Calu3 (cell line): ENCODE measurements at regions of chr1 and their contacts with region 1.

Region 1: GRCh38 chr1:206725109-206725963 is 40.6 kb downstream of the MAPKAPK2 start:
- DNase-seq: peak; percentile 66
- H3K4me3 Mint-ChIP-seq: no peak overlapping the region
- H3K27ac Mint-ChIP-seq: no peak overlapping the region
- H3K4me1 Mint-ChIP-seq: peaks cover 46% of the 10 kb centered on the region
- H3K27me3 Mint-ChIP-seq: no peaks in the 10 kb centered on the region
- CTCF ChIP-seq: peak; percentile 40

Region 2: GRCh38 chr1:206489980-206490770 is 235.2 kb before region 1 on chr1:
- CTCF ChIA-PET with region 1: no interaction called
- intact Hi-C with region 1: no loop called
- DNase-seq: peak; percentile 84
- H3K4me3 Mint-ChIP-seq: no peak overlapping the region
- H3K27ac Mint-ChIP-seq: no peak overlapping the region
- H3K4me1 Mint-ChIP-seq: no peaks in the 10 kb centered on the region
- H3K27me3 Mint-ChIP-seq: no peaks in the 10 kb centered on the region
- CTCF ChIP-seq: peak; percentile 95

Region 3: DNA sequence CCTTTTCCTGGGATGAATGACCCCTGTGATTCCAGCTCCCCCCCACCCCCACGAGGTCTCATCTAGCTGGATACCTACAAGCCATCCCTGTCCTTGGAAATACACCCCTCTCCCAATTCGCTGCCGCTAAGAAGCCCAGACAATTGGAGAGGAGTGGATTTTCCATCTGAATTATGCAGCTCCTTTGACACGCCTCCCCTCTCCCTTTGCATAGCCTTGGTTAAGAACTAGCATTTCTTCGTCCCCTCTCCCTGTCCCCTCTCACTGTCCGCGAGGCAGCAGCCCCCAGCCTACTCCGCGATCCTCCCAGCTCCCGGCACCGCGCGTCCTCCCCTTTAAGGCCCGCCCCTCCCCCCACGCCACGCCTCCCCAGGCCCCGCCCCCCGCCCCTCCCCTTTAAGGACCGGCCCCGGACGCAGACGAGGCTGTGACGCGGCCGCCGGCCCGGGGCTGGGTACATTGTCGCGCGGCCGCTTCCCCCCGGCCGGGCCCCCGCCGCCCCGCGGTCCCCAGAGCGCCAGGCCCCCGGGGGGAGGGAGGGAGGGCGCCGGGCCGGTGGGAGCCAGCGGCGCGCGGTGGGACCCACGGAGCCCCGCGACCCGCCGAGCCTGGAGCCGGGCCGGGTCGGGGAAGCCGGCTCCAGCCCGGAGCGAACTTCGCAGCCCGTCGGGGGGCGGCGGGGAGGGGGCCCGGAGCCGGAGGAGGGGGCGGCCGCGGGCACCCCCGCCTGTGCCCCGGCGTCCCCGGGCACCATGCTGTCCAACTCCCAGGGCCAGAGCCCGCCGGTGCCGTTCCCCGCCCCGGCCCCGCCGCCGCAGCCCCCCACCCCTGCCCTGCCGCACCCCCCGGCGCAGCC is 40.6 kb before region 1 on chr1 and contains the start of gene MAPKAPK2:
- CTCF ChIA-PET with region 1: no interaction called
- intact Hi-C with region 1: loop called (anchors 5 kb)
- DNase-seq: peak; percentile 77
- H3K4me3 Mint-ChIP-seq: peak within 1 kb of the TSS; percentile 80
- H3K27ac Mint-ChIP-seq: peak within 1 kb of the TSS; percentile 81
- H3K4me1 Mint-ChIP-seq: peaks cover 33% of the 10 kb centered on the region
- H3K27me3 Mint-ChIP-seq: peaks cover 31% of the 10 kb centered on the region
- CTCF ChIP-seq: no peak
- total RNA-seq, gene MAPKAPK2: 93.7 and 96.2 TPM in 2 replicates

Region 4: GRCh38 chr1:206709772-206710459 is 15.4 kb before region 1 on chr1:
- CTCF ChIA-PET with region 1: interaction called, 4 read pairs
- intact Hi-C with region 1: loop called (anchors 2 kb)
- DNase-seq: no peak
- H3K4me3 Mint-ChIP-seq: peak overlapping the region; percentile 51
- H3K27ac Mint-ChIP-seq: peak overlapping the region; percentile 72
- H3K4me1 Mint-ChIP-seq: peaks cover 82% of the 10 kb centered on the region
- H3K27me3 Mint-ChIP-seq: no peaks in the 10 kb centered on the region
- CTCF ChIP-seq: no peak

Region 5: GRCh38 chr1:206753141-206753540 is 27.8 kb after region 1 on chr1:
- CTCF ChIA-PET with region 1: no interaction called
- intact Hi-C with region 1: no loop called
- DNase-seq: no peak
- H3K4me3 Mint-ChIP-seq: no peak overlapping the region
- H3K27ac Mint-ChIP-seq: no peak overlapping the region
- H3K4me1 Mint-ChIP-seq: no peaks in the 10 kb centered on the region
- H3K27me3 Mint-ChIP-seq: peaks cover 66% of the 10 kb centered on the region
- CTCF ChIP-seq: no peak